ENCODE measurements at regions of chr6 and their contacts with region 1.

Region 1: DNA sequence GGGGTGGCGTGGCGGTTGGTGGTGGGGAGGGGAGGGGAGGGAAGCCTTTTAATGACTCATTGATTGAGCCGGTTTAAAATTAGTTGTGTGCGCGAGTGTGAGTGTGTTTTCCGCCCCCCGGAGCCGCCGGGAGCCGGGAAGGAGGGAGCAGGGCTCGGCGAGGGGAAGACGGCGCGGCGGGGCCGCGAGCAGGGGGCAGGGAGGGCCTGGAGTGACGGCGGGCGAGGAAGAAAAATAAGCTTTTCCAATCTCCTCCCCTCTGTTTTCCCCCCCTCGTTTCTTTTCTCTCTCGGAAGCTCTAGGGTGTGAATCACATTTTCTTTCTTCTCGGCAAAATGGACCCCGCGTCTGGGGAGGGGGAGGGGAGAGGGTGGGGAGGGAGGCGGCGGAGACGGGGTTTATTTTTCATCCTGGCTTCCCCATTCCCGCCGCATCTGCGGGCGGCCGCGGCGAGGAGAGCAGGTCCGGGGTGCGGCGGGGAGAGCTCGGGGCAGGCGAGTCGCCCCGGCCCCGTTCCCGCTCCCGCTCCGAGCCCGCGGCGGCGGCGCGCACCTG is 847 bp downstream of the BICRAL start:
- DNase-seq: peak; percentile 64 to 85 (median 79)
- ATAC-seq: peak; percentile 65 to 71 (median 66)
- H3K4me3 ChIP-seq: peak overlapping the region; percentile 64 to 97
- H3K4me3 Mint-ChIP-seq: peak overlapping the region in 2 of 3 donors; percentile 97
- H3K27ac ChIP-seq: peak overlapping the region; percentile 99
- H3K27ac Mint-ChIP-seq: peak overlapping the region; percentile 99 to 100
- H3K4me1 ChIP-seq: peaks cover 31 to 37% of the 10 kb centered on the region in 2 experiments
- H3K4me1 Mint-ChIP-seq: peaks cover 29 to 34% (median 31%) of the 10 kb centered on the region in 3 donors
- H3K27me3 ChIP-seq: no peaks in the 10 kb centered on the region
- H3K27me3 Mint-ChIP-seq: no peaks in the 10 kb centered on the region

Region 2: DNA sequence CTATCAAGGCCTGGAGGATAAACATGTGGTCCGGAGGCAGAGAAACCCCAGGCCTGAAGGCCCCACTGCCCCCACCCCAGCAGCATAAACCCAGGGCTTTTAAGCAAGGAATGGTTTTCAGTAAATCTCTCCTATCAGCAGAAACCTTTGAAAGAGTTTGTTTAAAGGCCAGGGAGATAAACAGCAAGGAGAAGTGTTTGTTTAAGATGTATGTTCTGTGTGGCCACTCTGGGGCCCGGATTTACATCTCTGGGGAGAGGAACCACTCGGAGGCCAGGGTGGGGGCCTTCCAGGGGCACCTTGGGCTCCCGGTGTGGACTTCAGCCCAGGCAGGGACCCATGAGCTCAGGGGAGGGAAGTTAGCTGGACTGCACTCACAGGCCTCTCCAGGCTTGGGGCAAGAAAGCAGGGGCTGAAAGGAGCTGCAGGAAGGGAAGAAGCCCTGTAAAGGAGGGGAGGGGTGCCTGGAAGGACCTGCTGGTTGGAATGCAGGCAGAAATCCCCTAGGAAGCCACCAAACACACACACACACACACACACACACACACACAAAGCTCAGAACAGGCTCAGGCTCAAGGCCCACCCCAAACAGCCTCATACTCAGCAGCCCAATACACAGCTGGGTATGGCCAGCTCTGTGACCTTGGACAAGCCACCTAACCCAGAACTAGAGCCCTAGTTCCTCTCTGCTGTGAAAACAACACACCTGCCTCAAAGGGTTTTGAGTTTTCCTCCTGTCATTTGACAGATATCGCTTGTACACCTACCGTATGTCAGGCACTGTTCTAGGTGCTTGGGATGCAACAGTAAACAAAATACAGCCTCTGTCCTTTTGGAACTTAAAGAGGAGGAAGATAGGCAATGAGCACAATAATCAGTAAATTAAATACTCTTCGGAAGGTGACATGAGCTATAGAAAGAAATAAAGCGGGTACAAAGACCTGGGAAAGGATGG is 1262.7 kb before region 1 on chr6:
- CTCF ChIA-PET with region 1: no interaction called
- POLR2A ChIA-PET with region 1: no interaction called
- DNase-seq: no peak
- ATAC-seq: no peak
- H3K4me3 ChIP-seq: no peak overlapping the region
- H3K4me3 Mint-ChIP-seq: no peak overlapping the region
- H3K27ac ChIP-seq: no peak overlapping the region
- H3K27ac Mint-ChIP-seq: no peak overlapping the region
- H3K4me1 ChIP-seq: no peaks in the 10 kb centered on the region
- H3K4me1 Mint-ChIP-seq: no peaks in the 10 kb centered on the region
- H3K27me3 ChIP-seq: peaks cover 0 to 22% of the 10 kb centered on the region in 2 experiments
- H3K27me3 Mint-ChIP-seq: peaks cover 14 to 20% of the 10 kb centered on the region in 2 donors

Region 3: GRCh38 chr6:41878246-41878645 is 904.5 kb before region 1 on chr6:
- CTCF ChIA-PET with region 1: no interaction called
- POLR2A ChIA-PET with region 1: no interaction called
- DNase-seq: no peak
- ATAC-seq: no peak
- H3K4me3 ChIP-seq: no peak overlapping the region
- H3K4me3 Mint-ChIP-seq: no peak overlapping the region
- H3K27ac ChIP-seq: no peak overlapping the region
- H3K27ac Mint-ChIP-seq: no peak overlapping the region
- H3K4me1 ChIP-seq: no peaks in the 10 kb centered on the region
- H3K4me1 Mint-ChIP-seq: no peaks in the 10 kb centered on the region
- H3K27me3 ChIP-seq: no peaks in the 10 kb centered on the region
- H3K27me3 Mint-ChIP-seq: no peaks in the 10 kb centered on the region

Region 4: GRCh38 chr6:42726485-42727086 is 56.1 kb before region 1 on chr6:
- CTCF ChIA-PET with region 1: interaction called in 1 of 2 experiments, 5 read pairs
- POLR2A ChIA-PET with region 1: interaction called in 1 of 2 experiments, 15 read pairs
- DNase-seq: peak; percentile 32 to 94 (median 71)
- ATAC-seq: peak; percentile 95 to 97 (median 96)
- H3K4me3 ChIP-seq: peak overlapping the region; percentile 57 to 82
- H3K4me3 Mint-ChIP-seq: peak overlapping the region; percentile 82 to 94 (median 84)
- H3K27ac ChIP-seq: peak overlapping the region; percentile 73
- H3K27ac Mint-ChIP-seq: peak overlapping the region; percentile 95 to 99
- H3K4me1 ChIP-seq: peaks cover 0 to 17% of the 10 kb centered on the region in 2 experiments
- H3K4me1 Mint-ChIP-seq: peaks cover 20 to 23% (median 21%) of the 10 kb centered on the region in 3 donors
- H3K27me3 ChIP-seq: peaks cover 0 to 6% of the 10 kb centered on the region in 2 experiments
- H3K27me3 Mint-ChIP-seq: peaks cover 0 to 3% of the 10 kb centered on the region in 2 donors

Region 5: GRCh38 chr6:42766141-42766670 is 16.5 kb before region 1 on chr6:
- CTCF ChIA-PET with region 1: interaction called, 4 to 17 read pairs
- POLR2A ChIA-PET with region 1: interaction called, 12 to 133 read pairs
- DNase-seq: no peak
- ATAC-seq: no peak
- H3K4me3 ChIP-seq: no peak overlapping the region
- H3K4me3 Mint-ChIP-seq: no peak overlapping the region
- H3K27ac ChIP-seq: no peak overlapping the region
- H3K27ac Mint-ChIP-seq: peak overlapping the region in 1 of 2 donors; percentile 18
- H3K4me1 ChIP-seq: peaks cover 10 to 29% of the 10 kb centered on the region in 2 experiments
- H3K4me1 Mint-ChIP-seq: peaks cover 28 to 56% (median 44%) of the 10 kb centered on the region in 3 donors
- H3K27me3 ChIP-seq: no peaks in the 10 kb centered on the region
- H3K27me3 Mint-ChIP-seq: no peaks in the 10 kb centered on the region

Region 6: GRCh38 chr6:42851599-42851998 is 68.9 kb after region 1 on chr6:
- CTCF ChIA-PET with region 1: no interaction called
- POLR2A ChIA-PET with region 1: interaction called in 1 of 2 experiments, 10 read pairs
- DNase-seq: no peak
- ATAC-seq: no peak
- H3K4me3 ChIP-seq: no peak overlapping the region
- H3K4me3 Mint-ChIP-seq: no peak overlapping the region
- H3K27ac ChIP-seq: no peak overlapping the region
- H3K27ac Mint-ChIP-seq: no peak overlapping the region
- H3K4me1 ChIP-seq: no peaks in the 10 kb centered on the region
- H3K4me1 Mint-ChIP-seq: peaks cover 0 to 3% (median 0%) of the 10 kb centered on the region in 3 donors
- H3K27me3 ChIP-seq: no peaks in the 10 kb centered on the region
- H3K27me3 Mint-ChIP-seq: no peaks in the 10 kb centered on the region

Region 7: DNA sequence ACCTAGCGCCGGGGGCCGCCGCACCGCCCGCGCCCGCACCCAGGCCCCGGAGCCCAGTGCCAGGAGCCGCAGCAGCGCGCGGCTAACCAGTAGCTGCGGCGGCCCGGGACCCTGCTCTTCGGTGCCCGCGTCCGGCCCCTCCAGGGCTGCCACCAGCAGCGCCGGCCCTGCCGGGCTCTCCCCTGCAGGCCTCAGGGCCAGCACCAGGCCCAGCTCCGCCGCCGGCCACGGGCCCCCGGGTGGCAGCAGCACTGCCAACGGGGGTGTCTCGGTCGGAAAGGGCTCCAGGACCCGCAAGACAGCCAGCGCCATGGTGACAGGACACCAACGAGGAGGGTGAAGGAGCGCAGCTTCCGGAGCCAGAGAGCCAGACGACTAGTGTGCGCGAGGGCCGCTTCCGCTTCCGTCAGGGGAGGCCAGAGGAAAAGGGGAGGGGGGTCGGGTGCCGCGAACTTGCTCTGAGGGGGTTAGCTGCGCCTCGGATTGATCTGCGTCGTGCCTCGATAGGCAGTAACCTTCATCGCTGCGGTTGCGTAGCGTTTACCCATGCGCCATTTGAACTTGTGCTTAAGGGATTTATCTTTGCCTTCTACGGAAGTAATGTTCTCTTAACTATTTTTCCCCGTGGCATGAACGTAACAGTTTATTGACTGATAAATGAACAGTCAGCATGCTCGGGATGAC is 196.3 kb after region 1 on chr6 and contains the start of gene PEX6:
- CTCF ChIA-PET with region 1: no interaction called
- POLR2A ChIA-PET with region 1: interaction called in 1 of 2 experiments, 11 read pairs
- DNase-seq: peak; percentile 88 to 98 (median 95)
- ATAC-seq: peak; percentile 94 to 96 (median 95)
- H3K4me3 ChIP-seq: peak within 1 kb of the TSS; percentile 72 to 85
- H3K4me3 Mint-ChIP-seq: peak within 1 kb of the TSS; percentile 88 to 93 (median 92)
- H3K27ac ChIP-seq: peak within 1 kb of the TSS; percentile 85
- H3K27ac Mint-ChIP-seq: peak within 1 kb of the TSS; percentile 97 to 99
- H3K4me1 ChIP-seq: peaks cover 23 to 48% of the 10 kb centered on the region in 2 experiments
- H3K4me1 Mint-ChIP-seq: peaks cover 48 to 54% (median 49%) of the 10 kb centered on the region in 3 donors
- H3K27me3 ChIP-seq: no peaks in the 10 kb centered on the region
- H3K27me3 Mint-ChIP-seq: no peaks in the 10 kb centered on the region
- total RNA-seq, gene PEX6: 20.5 to 30.5 (median 27.4) TPM

Measured in T-cell (primary cell).